ENCODE measurements at regions of chr16 and their contacts with region 1.

Region 1: DNA sequence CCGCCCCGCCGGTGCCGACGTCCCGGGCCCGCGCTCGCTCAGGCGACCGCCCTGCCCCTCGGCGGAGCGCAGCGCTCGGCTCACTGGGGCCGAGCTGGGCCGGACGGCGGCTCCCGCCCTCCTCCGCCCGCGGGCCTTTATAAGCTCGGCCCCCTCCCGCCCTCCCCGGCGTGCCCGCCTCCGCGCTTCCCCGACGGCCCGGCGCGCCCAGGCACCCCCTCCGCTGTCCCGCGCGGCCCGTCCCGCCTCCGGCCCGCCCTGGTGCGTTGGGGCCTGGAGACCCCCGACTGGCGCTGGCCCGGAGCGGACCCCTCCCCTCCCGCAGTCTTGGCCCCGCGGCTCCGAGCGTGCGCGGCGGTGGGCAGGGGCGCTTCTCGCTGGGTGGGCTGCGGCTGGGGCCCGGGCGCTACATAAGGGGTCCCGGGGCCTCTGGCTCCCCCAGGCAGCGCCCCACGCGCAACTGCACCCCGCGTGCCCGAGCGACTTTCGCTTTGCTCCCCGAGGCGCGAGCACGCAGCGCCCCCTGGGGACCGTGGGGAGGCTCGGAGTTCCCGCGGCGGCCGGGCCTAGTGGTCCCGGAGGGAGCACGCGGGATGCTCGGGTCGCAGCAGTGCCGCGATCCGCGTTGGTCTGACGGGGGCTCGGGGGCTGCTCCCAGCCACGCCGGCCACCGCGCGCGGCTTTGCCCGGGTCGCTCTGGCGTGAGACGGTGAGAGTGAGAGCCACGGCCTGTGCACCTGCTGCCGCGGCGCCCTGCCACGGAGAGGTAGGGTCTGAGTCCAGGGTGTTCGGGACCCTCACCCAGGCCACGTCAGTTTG is at the start of gene PIEZO1:
- DNase-seq: peak; percentile 84
- ATAC-seq: peak; percentile 40
- H3K4me3 Mint-ChIP-seq: peak within 1 kb of the TSS; percentile 76
- H3K27ac Mint-ChIP-seq: peak within 1 kb of the TSS; percentile 88
- H3K4me1 Mint-ChIP-seq: peaks cover 48% of the 10 kb centered on the region
- H3K27me3 Mint-ChIP-seq: no peaks in the 10 kb centered on the region
- total RNA-seq, gene PIEZO1: 269 to 347 TPM

Region 2: DNA sequence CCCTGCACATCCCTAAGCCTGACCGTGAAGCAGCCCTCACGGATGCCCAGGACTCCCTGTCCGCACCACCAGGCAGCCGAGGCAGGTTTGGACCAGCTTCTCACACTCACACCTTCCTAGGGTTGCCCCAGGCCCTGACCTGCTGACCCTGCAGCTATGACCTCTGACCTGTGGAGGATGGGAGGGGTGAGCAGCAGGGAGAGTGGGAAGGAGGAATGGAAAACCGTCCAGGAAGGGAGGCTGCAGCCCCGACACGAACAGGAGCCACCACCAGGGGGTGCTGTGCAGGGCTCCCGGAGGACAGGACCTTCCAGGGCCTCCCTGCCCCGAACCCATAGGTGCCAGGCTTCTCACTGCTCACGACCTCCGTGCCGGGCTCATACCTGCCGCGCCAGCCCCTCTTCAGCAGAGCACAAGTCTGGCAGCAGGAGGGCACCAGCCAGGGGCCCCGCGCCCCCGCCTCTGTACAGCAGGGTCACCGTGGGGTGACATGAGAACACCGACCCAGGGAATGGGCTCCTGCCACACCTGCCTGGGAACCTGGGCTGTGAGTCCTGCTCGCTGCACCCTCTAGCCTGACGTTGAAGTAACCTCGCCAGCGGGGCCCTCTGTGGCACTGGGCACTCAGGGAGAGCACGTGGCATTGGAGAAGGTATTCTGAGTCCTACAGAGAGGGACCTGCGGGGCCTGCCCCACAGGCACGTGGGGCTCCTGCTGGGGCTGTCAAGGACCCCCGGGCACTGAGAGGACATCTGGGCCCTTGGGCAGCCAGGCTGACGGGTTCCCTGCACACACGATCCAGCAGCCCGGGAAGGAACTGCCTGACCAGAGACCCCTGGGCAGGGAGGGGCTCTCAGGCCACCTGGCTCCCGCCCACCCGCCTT is 41.4 kb before region 1 on chr16:
- CTCF ChIA-PET with region 1: interaction called, 90 read pairs
- DNase-seq: peak; percentile 72
- ATAC-seq: peak; percentile 29
- H3K4me3 Mint-ChIP-seq: no peak overlapping the region
- H3K27ac Mint-ChIP-seq: no peak overlapping the region
- H3K4me1 Mint-ChIP-seq: peaks cover 35% of the 10 kb centered on the region
- H3K27me3 Mint-ChIP-seq: no peaks in the 10 kb centered on the region

Region 3: GRCh38 chr16:88754912-88755744 is 30.2 kb before region 1 on chr16:
- CTCF ChIA-PET with region 1: interaction called, 13 read pairs
- DNase-seq: no peak
- ATAC-seq: no peak
- H3K4me3 Mint-ChIP-seq: no peak overlapping the region
- H3K27ac Mint-ChIP-seq: no peak overlapping the region
- H3K4me1 Mint-ChIP-seq: peaks cover 28% of the 10 kb centered on the region
- H3K27me3 Mint-ChIP-seq: no peaks in the 10 kb centered on the region

Region 4: DNA sequence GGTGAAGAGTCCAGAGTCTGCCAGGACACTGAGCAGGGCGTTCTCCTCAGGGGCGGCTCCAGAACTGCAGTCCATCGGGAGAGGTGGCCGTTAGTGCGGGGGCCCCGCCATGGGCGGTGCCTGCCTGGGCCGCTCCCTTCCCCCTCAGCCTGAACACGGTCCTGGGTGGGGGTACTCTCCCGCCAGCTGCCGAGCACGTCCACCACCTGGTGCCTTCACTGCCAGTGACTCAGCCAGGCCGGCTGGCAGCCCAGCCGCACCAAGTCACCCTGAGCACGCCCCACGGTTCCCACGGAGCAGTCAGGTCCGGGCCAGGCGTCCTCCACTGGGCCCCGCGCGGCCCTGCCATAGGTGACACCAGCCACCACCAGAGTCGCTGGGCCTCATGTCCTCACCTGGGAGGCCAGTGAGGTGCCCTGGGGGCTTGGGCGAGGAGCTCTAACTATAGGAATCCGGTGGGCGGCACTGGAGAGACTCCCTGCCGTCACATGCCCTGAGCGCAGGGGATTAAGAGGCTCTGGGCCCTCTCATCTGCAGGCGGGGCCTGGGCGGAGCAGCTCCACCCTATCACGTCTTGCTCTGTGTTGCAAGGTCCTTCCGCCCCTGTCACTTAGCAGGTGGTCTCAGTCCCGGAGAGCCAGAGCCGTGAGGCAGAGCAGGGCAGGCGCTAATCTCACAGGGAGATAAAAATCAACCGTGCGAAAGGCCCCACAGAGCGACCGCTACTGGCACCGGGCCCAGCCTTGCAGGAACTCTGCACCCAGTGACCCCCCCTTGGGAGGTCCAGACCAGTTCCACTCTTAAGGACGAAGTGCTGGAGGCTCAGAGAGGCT is 14.6 kb before region 1 on chr16:
- CTCF ChIA-PET with region 1: interaction called, 12 read pairs
- DNase-seq: no peak
- ATAC-seq: peak; percentile 10
- H3K4me3 Mint-ChIP-seq: no peak overlapping the region
- H3K27ac Mint-ChIP-seq: no peak overlapping the region
- H3K4me1 Mint-ChIP-seq: peaks cover 36% of the 10 kb centered on the region
- H3K27me3 Mint-ChIP-seq: no peaks in the 10 kb centered on the region

Region 5: GRCh38 chr16:88803264-88803987 is 18.1 kb after region 1 on chr16 and contains the start of gene CDT1:
- CTCF ChIA-PET with region 1: interaction called, 19 read pairs
- DNase-seq: peak; percentile 86
- ATAC-seq: peak; percentile 57
- H3K4me3 Mint-ChIP-seq: peak within 1 kb of the TSS; percentile 82
- H3K27ac Mint-ChIP-seq: peak within 1 kb of the TSS; percentile 88
- H3K4me1 Mint-ChIP-seq: peaks cover 44% of the 10 kb centered on the region
- H3K27me3 Mint-ChIP-seq: no peaks in the 10 kb centered on the region
- total RNA-seq, gene CDT1: 124 to 191 TPM

Region 6: GRCh38 chr16:88811769-88812512 is 26.6 kb after region 1 on chr16 and contains the start of gene APRT:
- CTCF ChIA-PET with region 1: interaction called, 20 read pairs
- DNase-seq: peak; percentile 97
- ATAC-seq: peak; percentile 84
- H3K4me3 Mint-ChIP-seq: peak within 1 kb of the TSS; percentile 88
- H3K27ac Mint-ChIP-seq: peak within 1 kb of the TSS; percentile 98
- H3K4me1 Mint-ChIP-seq: peaks cover 30% of the 10 kb centered on the region
- H3K27me3 Mint-ChIP-seq: no peaks in the 10 kb centered on the region
- total RNA-seq, gene APRT: 127 to 148 TPM